GM13976 (cell line): ENCODE measurements at regions of chr18 and their contacts with region 1.

Region 1: DNA sequence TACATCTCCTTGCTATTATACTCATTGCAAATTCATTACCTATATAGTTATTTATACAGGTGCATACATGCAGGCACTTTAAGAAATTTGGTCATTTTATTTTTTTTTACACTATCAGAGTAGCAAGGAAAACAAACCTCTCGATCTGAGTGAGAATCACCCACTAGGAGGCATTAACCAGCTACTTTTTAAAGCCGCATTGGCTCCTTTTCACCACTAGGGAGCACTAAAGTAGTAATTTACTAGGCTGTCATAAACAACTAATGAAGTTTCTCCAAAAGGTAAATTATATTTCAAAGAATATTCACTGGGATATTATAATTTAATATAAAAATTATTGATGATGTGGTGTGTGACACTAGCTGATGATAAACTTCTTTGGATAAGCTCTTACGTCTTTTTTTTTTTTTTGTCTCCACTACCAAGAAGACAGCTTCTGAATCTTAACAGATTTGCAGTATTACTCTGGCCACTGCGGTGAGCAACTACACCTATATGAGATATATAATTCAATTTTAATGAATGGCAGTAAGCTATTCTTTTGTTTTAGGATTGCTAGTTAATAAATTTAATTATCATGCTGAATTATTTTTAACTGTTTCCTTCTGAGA is 101.9 kb downstream of the NOL4 start:
- DNase-seq: peak; percentile 42
- CTCF ChIP-seq: peak; percentile 70

Region 2: DNA sequence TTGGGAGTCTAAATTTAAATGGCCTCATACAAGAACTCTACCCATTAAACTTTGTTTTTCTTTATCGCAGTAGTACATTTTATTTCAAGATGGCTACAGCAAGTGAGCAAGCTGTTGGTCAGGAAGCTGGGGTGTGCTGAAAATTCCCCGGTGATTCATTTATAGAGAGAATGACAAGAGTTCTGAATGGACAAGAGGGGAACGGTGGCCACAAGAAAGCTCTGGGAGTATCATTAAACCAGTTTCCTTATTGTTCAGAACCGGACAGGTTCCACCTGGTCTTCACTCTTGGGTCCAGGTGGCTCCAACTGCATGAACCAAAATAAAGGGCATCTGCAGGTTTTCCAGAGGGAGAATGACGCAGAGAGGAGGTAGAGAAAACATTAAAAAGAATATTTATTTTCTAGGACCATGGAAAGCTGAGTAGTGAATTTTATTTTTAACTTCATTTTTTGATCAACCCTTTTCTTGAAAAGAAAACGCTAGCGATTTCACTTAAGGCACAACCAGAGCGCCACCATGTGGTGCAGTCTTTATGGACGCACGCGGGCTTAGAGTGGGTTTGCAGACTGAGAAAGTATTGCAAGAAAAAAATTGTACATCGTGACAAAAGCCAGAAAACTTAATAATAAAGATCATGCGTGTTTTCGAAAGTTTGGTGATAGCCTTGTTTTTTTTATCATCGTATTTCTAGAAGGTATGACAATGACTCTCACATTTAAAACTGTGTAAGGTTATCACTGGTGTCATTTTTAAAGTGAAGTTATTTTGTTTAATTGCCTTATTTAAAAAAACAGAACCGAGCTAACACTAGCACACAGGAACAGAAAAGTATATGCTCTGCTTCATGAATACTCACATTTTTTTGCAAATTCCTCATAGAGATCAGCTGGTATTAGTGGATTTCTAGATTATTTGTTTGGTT is 199.8 kb after region 1 on chr18:
- in situ Hi-C with region 1: loop called (anchors 10 kb)
- DNase-seq: peak; percentile 21
- CTCF ChIP-seq: peak; percentile 71

Region 3: DNA sequence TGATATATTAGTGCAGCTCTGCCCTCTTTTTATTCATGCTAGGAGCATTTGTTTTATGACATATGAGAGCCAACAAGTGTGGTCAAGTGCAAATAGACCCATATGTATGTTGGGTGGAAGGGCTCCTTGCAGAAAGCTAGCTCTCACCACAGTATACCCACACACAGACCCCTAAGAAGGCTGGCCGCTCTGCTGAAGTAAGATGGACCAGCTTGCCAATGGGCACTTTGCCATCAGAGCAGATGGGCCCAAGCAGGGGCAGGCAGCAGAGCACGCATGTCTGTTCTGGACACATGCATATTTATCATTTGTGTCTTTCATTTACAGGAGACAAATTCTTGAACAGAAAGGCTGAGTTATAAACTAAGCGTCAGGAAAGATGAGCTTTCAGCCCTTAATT is 399.8 kb after region 1 on chr18:
- in situ Hi-C with region 1: no loop called
- DNase-seq: no peak
- CTCF ChIP-seq: no peak